ENCODE measurements at regions of chr3 and their contacts with region 1.

Region 1: DNA sequence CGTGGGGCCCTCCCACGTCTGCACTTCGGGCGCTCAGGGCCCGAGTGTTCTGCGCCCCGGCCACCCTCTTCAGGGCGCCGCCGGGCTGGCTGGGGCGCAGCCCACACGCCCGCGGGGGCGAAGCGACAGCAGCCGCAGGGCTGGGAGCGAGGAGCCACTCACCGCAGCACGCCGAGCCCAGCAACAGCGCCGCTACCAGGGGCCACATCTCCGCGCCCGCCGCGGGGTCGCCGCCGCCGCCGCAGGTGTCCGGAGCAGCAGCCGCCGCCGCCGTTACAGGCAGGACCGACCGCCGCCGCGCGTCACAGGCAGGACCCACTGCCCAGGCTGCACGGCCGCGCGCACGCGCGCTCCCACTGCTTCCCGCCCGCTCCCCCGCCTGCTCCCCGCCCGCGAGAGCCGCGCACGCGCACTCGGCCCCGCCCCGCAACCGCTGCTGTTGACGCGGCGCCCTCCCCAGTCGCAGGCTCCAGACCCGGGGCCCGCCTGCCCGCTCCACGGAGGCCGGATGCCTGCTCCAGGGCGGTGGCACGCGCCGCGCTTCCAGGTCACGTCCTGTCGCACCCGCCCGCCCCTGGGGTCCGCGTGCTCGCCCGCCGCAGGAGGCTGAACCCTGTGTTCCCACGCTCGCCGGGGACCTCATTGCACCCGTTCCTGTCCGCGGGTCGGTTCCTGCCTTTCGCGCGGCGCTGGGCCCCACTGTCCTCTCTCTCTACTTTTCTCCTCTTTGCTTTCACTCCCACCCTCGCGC is at the start of gene CD47:
- DNase-seq: peak; percentile 95 to 99 (median 96)
- ATAC-seq: peak; percentile 82 to 97 (median 94)
- H3K4me3 ChIP-seq: peak within 1 kb of the TSS; percentile 84 to 99 (median 92)
- H3K27ac ChIP-seq: peak within 1 kb of the TSS; percentile 25 to 97 (median 90)
- H3K4me1 ChIP-seq: peaks cover 0 to 41% (median 19%) of the 10 kb centered on the region in 12 donors
- H3K27me3 ChIP-seq: no peaks in the 10 kb centered on the region
- CTCF ChIP-seq: no peak
- POLR2A ChIP-seq: peak; percentile 19 to 89
- total RNA-seq, gene CD47: 34.4 to 80.6 (median 45.2) TPM

Region 2: GRCh38 chr3:107927361-107928083 is 163.4 kb before region 1 on chr3:
- intact Hi-C with region 1: loop called in 2 of 10 experiments (anchors 2 to 10 kb)
- DNase-seq: peak; percentile 59 to 84 (median 65)
- ATAC-seq: peak; percentile 85 to 99 (median 97)
- H3K4me3 ChIP-seq: peak overlapping the region; percentile 35 to 78 (median 61)
- H3K27ac ChIP-seq: peak overlapping the region in 1 of 12 donors; percentile 29
- H3K4me1 ChIP-seq: peaks cover 0 to 18% (median 7%) of the 10 kb centered on the region in 12 donors
- H3K27me3 ChIP-seq: peaks cover 0 to 15% (median 0%) of the 10 kb centered on the region in 9 donors
- CTCF ChIP-seq: peak; percentile 82 to 97 (median 93)
- POLR2A ChIP-seq: no peak

Region 3: GRCh38 chr3:107987036-107987947 is 103.6 kb before region 1 on chr3:
- intact Hi-C with region 1: loop called in 1 of 10 experiments (anchors 10 kb)
- DNase-seq: peak in 4 of 5 donors; percentile 73 to 86 (median 78)
- ATAC-seq: peak; percentile 68 to 93 (median 88)
- H3K4me3 ChIP-seq: no peak overlapping the region
- H3K27ac ChIP-seq: peak overlapping the region in 9 of 12 donors; percentile 2 to 89 (median 43)
- H3K4me1 ChIP-seq: peaks cover 0 to 53% (median 26%) of the 10 kb centered on the region in 12 donors
- H3K27me3 ChIP-seq: no peaks in the 10 kb centered on the region
- CTCF ChIP-seq: no peak
- POLR2A ChIP-seq: no peak

Region 4: GRCh38 chr3:108117241-108117775 is 26.4 kb after region 1 on chr3:
- intact Hi-C with region 1: loop called in 1 of 10 experiments (anchors 1 kb)
- DNase-seq: no peak
- ATAC-seq: peak in 2 of 4 donors; percentile 62 to 63
- H3K4me3 ChIP-seq: no peak overlapping the region
- H3K27ac ChIP-seq: no peak overlapping the region
- H3K4me1 ChIP-seq: peaks cover 0 to 4% (median 0%) of the 10 kb centered on the region in 12 donors
- H3K27me3 ChIP-seq: no peaks in the 10 kb centered on the region
- CTCF ChIP-seq: no peak
- POLR2A ChIP-seq: no peak

Region 5: GRCh38 chr3:108221911-108222852 is 131.3 kb after region 1 on chr3 and contains the start of gene IFT57:
- intact Hi-C with region 1: loop called in 7 of 10 experiments (anchors 5 to 10 kb)
- DNase-seq: peak; percentile 96 to 98 (median 98)
- ATAC-seq: peak; percentile 100
- H3K4me3 ChIP-seq: peak within 1 kb of the TSS; percentile 66 to 91 (median 81)
- H3K27ac ChIP-seq: peak within 1 kb of the TSS in 11 of 12 donors; percentile 6 to 88 (median 73)
- H3K4me1 ChIP-seq: peaks cover 0 to 49% (median 13%) of the 10 kb centered on the region in 12 donors
- H3K27me3 ChIP-seq: no peaks in the 10 kb centered on the region
- CTCF ChIP-seq: no peak
- POLR2A ChIP-seq: peak in 1 of 2 donors; percentile 45
- total RNA-seq, gene IFT57: 11.8 to 36.4 (median 22.9) TPM